Activated CD4-positive, alpha-beta T cell treated with anti-CD3 and anti-CD28 coated beads for 36 hours (primary cell): ENCODE measurements at regions of chr3 and their contacts with region 1.

Region 1: GRCh38 chr3:87167628-87168456 is 59.3 kb upstream of the CHMP2B start:
- DNase-seq: peak; percentile 43
- ATAC-seq: peak; percentile 68
- H3K4me3 Mint-ChIP-seq: no peak overlapping the region
- H3K27ac Mint-ChIP-seq: no peak overlapping the region
- H3K4me1 Mint-ChIP-seq: peaks cover 3% of the 10 kb centered on the region
- H3K27me3 Mint-ChIP-seq: peaks cover 12% of the 10 kb centered on the region

Region 2: DNA sequence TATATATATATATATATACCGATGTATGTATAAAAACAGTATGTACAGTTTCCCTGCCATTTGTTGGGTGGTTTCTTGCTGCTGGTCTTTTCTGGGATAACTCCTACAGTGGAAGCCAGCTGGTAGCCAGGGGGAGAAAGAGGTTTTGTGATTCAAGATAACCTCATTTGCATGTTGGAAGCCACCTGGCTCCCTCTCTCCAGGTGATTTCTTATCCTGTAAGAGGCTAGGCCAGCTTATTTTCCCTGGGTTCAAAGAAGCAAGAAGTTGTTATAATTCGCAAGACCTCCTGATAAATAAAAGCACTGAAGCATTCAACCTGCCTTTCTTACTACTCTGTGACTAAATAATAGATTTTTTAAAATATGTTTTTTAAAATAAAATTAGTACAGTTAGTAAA is 620.1 kb before region 1 on chr3:
- CTCF ChIA-PET with region 1: no interaction called
- POLR2A ChIA-PET with region 1: no interaction called
- intact Hi-C with region 1: no loop called
- DNase-seq: no peak
- ATAC-seq: no peak
- H3K4me3 Mint-ChIP-seq: no peak overlapping the region
- H3K27ac Mint-ChIP-seq: no peak overlapping the region
- H3K4me1 Mint-ChIP-seq: no peaks in the 10 kb centered on the region
- H3K27me3 Mint-ChIP-seq: no peaks in the 10 kb centered on the region

Region 3: GRCh38 chr3:86702381-86702958 is 465.4 kb before region 1 on chr3:
- CTCF ChIA-PET with region 1: interaction called, 4 read pairs
- POLR2A ChIA-PET with region 1: no interaction called
- intact Hi-C with region 1: loop called in 1 of 2 experiments (anchors 1 kb)
- DNase-seq: no peak
- ATAC-seq: no peak
- H3K4me3 Mint-ChIP-seq: no peak overlapping the region
- H3K27ac Mint-ChIP-seq: no peak overlapping the region
- H3K4me1 Mint-ChIP-seq: no peaks in the 10 kb centered on the region
- H3K27me3 Mint-ChIP-seq: no peaks in the 10 kb centered on the region

Region 4: GRCh38 chr3:86774082-86774691 is 393.7 kb before region 1 on chr3:
- CTCF ChIA-PET with region 1: interaction called, 17 read pairs
- POLR2A ChIA-PET with region 1: no interaction called
- intact Hi-C with region 1: loop called (anchors 1 to 5 kb)
- DNase-seq: no peak
- ATAC-seq: no peak
- H3K4me3 Mint-ChIP-seq: no peak overlapping the region
- H3K27ac Mint-ChIP-seq: no peak overlapping the region
- H3K4me1 Mint-ChIP-seq: no peaks in the 10 kb centered on the region
- H3K27me3 Mint-ChIP-seq: no peaks in the 10 kb centered on the region

Region 5: DNA sequence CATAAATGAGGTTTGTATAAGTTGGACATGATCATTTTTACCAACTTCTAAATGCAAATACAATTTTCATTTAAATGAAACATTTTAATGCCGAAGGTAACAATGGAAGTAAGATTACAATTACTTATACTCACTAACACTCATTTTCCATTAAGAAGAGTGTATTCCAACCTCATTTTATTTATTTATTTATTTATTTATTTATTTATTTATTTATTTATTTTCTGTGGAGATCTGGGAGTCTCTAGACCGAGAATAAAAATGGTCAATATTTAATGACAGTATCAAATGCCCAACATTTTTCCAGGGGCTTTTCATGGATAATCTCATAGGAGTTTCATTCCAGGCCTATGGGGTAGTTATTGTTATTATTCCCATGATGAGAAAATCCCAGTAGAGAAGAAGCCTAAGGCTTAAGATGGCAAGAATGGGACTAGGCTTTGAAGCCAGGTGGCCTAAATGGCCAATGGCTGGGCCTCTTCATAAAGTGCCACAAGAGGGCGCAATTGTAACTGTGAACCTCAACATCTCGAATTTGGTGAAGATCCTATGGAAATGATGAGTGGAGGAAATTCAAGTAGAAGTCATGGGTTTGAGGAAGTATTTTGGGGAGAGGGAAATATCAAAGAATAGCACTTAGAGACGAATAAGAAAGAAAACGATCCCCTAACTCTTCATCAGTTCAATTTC is 198.2 kb before region 1 on chr3:
- CTCF ChIA-PET with region 1: interaction called, 4 read pairs
- POLR2A ChIA-PET with region 1: no interaction called
- intact Hi-C with region 1: loop called (anchors 1 to 10 kb)
- DNase-seq: peak; percentile 53
- ATAC-seq: no peak
- H3K4me3 Mint-ChIP-seq: no peak overlapping the region
- H3K27ac Mint-ChIP-seq: no peak overlapping the region
- H3K4me1 Mint-ChIP-seq: no peaks in the 10 kb centered on the region
- H3K27me3 Mint-ChIP-seq: no peaks in the 10 kb centered on the region